Activated CD4-positive, alpha-beta memory T cell treated with anti-CD3 and anti-CD28 coated beads, Interleukin-2, amount 10 ng/mL, durations not matched to agents 7 days and 5 days (primary cell): ENCODE measurements at regions of chr5 and their contacts with region 1.

Region 1: DNA sequence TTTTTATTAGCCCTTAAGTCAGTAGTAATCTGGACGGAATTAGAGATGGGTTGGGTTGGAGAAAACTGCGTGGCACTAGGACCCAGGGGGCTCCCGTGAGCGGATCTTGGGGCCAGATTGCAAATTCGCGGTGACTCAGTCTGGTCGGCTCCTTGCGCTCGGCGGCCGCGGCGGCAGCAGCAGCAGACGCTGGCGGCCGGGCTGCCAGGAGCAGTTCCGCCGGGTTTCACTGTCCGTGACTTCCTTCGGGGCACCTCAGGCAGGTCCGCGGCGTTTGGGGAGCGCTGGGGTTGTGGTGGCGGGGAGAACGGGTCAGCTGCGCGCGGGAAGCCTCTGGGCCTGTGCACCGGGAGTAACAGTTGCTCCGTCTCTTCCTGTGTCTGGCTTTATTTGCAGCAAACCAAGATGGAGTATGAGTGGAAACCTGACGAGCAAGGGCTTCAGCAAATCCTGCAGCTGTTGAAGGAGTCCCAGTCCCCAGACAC is 31.6 kb downstream of the TNPO1 start:
- DNase-seq: peak; percentile 88
- H3K4me3 Mint-ChIP-seq: peak overlapping the region; percentile 91
- H3K27ac Mint-ChIP-seq: peak overlapping the region; percentile 92
- H3K4me1 Mint-ChIP-seq: peaks cover 36% of the 10 kb centered on the region
- H3K27me3 Mint-ChIP-seq: peaks cover 2% of the 10 kb centered on the region

Region 2: GRCh38 chr5:72860499-72860898 is 12.5 kb after region 1 on chr5:
- CTCF ChIA-PET with region 1: interaction called, 4 read pairs
- POLR2A ChIA-PET with region 1: interaction called, 15 read pairs
- DNase-seq: no peak
- H3K4me3 Mint-ChIP-seq: no peak overlapping the region
- H3K27ac Mint-ChIP-seq: no peak overlapping the region
- H3K4me1 Mint-ChIP-seq: peaks cover 11% of the 10 kb centered on the region
- H3K27me3 Mint-ChIP-seq: no peaks in the 10 kb centered on the region

Region 3: DNA sequence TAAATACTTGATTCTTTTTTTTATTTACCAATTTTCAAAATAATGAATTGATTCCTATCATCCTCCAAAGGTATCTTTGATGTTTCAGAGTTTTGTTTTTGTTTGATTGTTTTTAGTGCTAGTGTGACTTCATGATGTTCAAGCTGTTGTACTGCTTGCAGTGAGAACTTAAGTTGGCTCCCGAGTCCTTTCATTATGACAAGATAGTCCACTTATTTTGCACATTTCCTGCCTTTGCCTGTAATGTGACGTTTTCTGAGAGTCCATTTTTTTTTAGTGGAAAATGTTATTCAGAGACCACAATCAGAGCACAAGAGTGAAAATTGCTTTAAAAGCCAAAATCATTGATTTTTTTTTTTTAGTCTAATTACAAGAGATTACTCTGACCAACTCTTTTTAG is 47.7 kb after region 1 on chr5:
- CTCF ChIA-PET with region 1: interaction called, 4 read pairs
- POLR2A ChIA-PET with region 1: interaction called, 13 read pairs
- DNase-seq: no peak
- H3K4me3 Mint-ChIP-seq: no peak overlapping the region
- H3K27ac Mint-ChIP-seq: peak overlapping the region; percentile 73
- H3K4me1 Mint-ChIP-seq: peaks cover 10% of the 10 kb centered on the region
- H3K27me3 Mint-ChIP-seq: no peaks in the 10 kb centered on the region